Right ventricle myocardium superior (tissue), 1 donor: ENCODE measurements at regions of chr11 and their contacts with region 1.

Region 1: DNA sequence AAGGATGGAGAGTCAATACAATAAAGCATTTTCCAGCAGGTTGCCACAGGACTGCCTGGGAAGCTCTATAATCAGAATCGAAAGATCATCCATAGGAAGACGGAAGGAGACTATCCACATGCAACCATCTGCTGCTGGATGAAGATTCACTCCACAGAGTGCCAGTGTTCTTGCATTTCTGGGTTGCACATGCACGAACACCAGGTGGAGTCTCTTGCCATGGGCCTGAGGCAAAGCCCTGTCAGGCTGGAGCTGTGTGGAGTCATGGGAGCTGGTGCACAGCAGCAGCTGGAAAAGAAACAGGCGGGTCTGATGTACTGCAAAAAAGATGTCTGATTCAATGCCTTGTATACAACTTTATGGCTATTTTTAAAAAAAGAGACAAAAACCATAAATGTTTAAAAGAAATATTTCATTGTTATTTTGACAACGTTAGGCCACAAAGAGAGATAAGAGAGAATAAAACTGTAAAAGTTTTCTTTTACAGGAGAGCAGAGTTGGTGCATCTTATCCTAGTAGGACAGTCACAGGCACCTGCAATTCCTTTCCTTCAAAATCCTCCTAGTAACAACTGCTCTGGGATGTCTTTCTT is 12.9 kb upstream of the FAT3 start:
- DNase-seq: peak; percentile 39
- ATAC-seq: peak; percentile 71

Region 2: DNA sequence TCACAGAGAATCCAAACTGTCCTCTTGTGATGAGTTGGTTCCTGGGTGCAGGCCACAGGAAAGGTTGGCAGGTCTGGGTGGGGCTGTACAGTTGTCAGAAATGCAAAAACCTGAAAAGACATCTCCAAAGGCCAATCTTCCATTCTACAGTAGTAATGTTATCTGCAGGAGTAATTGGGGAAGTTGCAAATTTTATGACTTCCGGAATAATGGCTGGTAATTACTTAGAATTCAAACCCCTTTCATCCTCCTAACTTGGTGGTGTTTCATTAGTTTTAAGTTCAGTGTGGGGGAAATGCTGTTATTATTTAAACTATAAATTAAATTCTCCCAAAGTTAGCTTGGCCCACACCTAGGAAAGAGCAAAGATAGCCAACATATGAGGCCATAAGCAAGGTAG is 51.7 kb before region 1 on chr11:
- intact Hi-C with region 1: no loop called
- DNase-seq: no peak
- ATAC-seq: no peak

Region 3: GRCh38 chr11:92886243-92886905 is 674.7 kb after region 1 on chr11:
- intact Hi-C with region 1: loop called (anchors 10 kb)
- DNase-seq: no peak
- ATAC-seq: peak; percentile 85